Motor neuron (in vitro differentiated cells): ENCODE measurements at regions of chr2 and their contacts with region 1.

Region 1: DNA sequence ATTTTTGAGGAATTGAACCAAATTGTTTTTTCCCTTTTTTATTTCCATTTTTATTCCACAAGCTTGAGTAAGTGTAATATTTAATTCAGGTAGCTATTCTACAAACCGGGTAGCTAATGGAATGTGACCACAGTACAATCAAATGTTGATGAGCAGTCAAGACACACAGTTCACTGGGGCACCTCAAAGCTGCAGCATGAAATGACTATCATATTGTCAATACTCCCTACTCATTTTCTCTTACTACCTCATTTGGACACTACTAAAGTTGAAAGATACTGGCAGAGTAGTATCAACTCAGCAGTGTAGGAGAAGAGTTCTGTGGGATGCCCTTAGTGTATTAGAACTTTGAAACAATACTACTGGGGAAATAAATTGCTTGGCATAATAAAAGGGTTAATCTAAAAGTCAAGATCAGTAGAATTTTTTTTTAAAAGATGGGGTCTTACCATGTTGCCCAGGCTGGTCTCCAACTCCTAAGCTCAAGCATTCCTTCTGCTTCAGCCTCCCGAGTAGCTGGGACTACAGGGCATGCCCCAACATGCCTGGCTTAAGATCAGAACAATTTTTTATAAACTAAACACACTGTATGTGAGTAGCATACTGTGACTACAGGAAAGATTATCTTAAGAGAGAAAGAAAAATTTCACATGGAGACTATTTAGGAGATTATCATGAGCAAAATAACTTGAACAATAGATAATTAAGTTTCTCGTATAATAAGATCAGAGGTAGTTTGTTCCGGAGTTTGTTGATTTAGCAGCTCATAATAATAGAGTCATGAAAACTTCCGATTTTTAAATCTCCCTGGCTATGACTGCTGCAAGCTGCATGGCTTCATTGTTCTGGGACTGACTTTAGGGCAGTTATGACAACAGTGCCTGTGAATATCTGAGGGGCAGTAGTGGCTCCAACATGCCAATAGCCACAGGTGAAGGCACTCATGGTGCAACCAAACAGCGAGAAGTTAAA is 43.7 kb downstream of the MYO3B start:
- ATAC-seq: peak in 3 of 8 experiments; percentile 14 to 86 (median 86)
- H3K4me3 ChIP-seq: no peak overlapping the region
- H3K27ac ChIP-seq: no peak overlapping the region
- H3K4me1 ChIP-seq: peaks cover 20 to 35% of the 10 kb centered on the region in 2 donors

Region 2: DNA sequence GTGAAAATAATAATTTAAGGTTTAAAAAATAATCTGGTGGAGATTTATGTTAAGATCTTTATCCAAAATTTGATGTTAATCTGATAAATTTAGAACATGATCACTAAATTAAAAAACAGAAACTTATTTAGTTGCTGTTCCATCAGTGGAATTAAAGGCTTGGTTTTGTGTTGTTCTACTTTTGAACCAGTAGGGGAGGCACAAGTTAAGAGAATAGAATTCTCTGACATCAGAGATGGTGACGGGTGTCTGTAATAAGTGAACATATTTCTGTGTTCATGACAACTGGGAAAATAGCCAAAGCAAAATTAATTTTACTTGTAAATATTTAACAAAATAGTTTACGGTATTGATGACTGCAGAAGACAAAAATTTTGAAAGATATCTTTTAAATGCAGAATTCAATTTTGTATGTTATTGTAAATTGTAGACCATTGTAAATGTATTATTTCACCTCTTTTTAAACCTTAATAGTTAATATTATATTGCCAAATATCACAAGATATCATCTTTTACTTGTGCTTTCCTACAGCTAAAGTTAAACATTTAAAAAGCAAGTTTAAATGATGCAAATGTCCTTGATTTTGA is 288.4 kb before region 1 on chr2:
- in situ Hi-C with region 1: no loop called
- ATAC-seq: peak in 4 of 8 experiments; percentile 28 to 83 (median 70)
- H3K4me3 ChIP-seq: no peak overlapping the region
- H3K27ac ChIP-seq: no peak overlapping the region
- H3K4me1 ChIP-seq: no peaks in the 10 kb centered on the region

Region 3: DNA sequence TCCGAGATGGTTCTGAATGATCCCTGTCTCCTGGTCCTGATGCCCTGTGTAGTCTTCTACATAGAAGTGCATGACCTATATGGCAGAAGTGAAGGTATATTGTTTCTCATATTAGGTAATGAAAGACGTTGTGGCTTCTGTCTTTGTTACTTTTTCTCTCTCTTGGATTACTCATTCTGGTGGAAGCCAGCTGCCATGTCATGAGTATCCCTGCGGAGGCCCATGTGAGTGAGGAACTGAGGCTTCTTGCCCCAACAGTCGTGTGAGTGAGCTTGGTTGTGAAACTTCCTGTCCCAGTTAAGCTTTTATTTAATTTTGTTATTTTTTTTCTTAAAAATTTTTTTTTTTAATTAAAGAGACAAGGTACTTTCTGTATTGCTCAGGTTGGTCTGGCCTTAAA is 259.7 kb before region 1 on chr2:
- in situ Hi-C with region 1: loop called in 1 of 9 experiments (anchors 25 kb)
- ATAC-seq: no peak
- H3K4me3 ChIP-seq: no peak overlapping the region
- H3K27ac ChIP-seq: no peak overlapping the region
- H3K4me1 ChIP-seq: peaks cover 0 to 2% of the 10 kb centered on the region in 2 donors